HepG2 (cell line): ENCODE measurements at regions of chr18 and their contacts with region 1.

Region 1: DNA sequence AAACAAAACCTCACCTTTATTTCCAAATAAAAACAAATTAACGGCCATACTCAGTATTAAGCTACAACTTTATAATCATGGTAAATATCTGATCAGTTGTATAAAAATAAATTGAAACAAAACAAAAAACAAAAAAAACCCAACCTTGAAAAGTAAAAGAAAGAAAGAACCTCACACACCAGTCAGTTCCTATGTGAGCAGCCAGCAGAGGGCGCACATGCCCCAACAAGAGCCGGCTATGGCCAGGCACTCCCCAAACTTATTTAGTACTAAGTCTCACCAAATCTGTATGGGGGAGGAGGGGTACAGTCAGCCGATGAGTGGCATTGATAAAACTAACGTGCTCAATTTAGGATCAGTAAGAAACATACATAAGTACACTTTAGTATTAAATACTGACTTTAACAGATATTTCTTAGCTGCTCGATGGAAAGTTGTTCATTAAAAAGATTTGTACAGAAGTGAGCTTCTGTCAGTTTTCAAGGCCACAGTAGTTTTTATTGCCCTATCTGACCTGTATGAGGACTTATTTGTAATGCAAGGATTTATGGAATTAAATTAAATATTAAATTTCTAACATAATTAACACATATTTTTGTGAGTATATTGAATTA is 172.6 kb downstream of the TCF4 start:
- DNase-seq: peak; percentile 27
- ATAC-seq: peak; percentile 88
- H3K4me3 ChIP-seq: no peak overlapping the region
- H3K27ac ChIP-seq: no peak overlapping the region
- H3K4me1 ChIP-seq: no peaks in the 10 kb centered on the region
- H3K27me3 ChIP-seq: no peaks in the 10 kb centered on the region
- CTCF ChIP-seq: peak; percentile 75
- EP300 ChIP-seq: no peak
- POLR2A ChIP-seq: no peak
- RAD21 ChIP-seq: peak; percentile 41

Region 2: GRCh38 chr18:55465313-55465712 is 49.9 kb after region 1 on chr18:
- CTCF ChIA-PET with region 1: no interaction called
- POLR2A ChIA-PET with region 1: no interaction called
- in situ Hi-C with region 1: no loop called
- intact Hi-C with region 1: no loop called
- DNase-seq: no peak
- ATAC-seq: no peak
- H3K4me3 ChIP-seq: no peak overlapping the region
- H3K27ac ChIP-seq: no peak overlapping the region
- H3K4me1 ChIP-seq: no peaks in the 10 kb centered on the region
- H3K27me3 ChIP-seq: no peaks in the 10 kb centered on the region; a peak in 1 of 5 replicates
- CTCF ChIP-seq: no peak
- EP300 ChIP-seq: no peak
- POLR2A ChIP-seq: no peak
- RAD21 ChIP-seq: no peak

Region 3: DNA sequence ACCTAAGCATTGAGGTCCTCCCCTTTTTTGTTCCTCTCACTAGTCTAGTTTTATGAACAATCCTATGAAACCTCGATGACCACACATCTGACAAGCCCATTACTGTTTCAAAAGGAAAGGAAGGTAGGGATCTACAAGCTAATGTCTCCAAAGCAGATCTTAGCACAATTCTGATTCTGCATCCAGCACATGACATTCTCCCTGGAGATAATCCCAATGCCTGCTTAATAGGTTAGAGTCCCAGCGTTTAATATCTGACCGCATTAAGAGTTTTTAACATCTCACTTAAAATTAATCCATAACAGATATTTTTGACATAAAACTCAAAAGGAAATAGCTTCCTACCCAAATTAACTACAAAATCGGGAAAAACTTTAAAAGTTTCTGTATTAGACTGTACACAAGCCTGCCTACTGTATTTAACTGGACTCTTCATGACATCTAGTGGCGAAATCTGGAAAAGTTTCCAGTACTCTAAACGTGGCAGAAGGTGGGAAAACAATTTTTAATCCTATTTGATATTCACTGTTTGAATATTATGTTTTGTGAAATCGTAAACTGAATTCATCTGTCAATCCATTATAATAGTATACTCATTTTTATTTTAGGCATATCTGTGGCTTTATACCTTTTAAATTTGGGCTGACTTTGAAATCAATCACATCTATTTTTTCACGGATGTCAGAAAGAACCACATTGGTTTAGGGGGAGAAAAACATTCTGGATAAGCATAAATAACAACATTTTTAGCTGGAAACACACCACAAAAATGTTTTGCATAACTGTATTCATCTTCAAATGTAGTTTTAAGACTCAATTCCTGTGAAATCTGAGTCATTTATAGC is 1160.7 kb after region 1 on chr18:
- CTCF ChIA-PET with region 1: interaction called, 32 read pairs
- POLR2A ChIA-PET with region 1: no interaction called
- in situ Hi-C with region 1: loop called (anchors 5 kb)
- intact Hi-C with region 1: loop called (anchors 1 kb)
- DNase-seq: peak; percentile 36
- ATAC-seq: peak; percentile 87
- H3K4me3 ChIP-seq: no peak overlapping the region
- H3K27ac ChIP-seq: no peak overlapping the region
- H3K4me1 ChIP-seq: peaks cover 6% of the 10 kb centered on the region
- H3K27me3 ChIP-seq: no peaks in the 10 kb centered on the region
- CTCF ChIP-seq: peak; percentile 65
- EP300 ChIP-seq: no peak
- POLR2A ChIP-seq: no peak
- RAD21 ChIP-seq: peak; percentile 35; the same call in 1 of the 2 replicates